Mammary epithelial cell (primary cell): ENCODE measurements at regions of chr12 and their contacts with region 1.

Region 1: GRCh38 chr12:26651566-26652188 is 181.3 kb downstream of the ITPR2 start:
- DNase-seq: peak; percentile 67
- H3K4me3 ChIP-seq: no peak overlapping the region
- H3K27ac ChIP-seq: no peak overlapping the region
- H3K4me1 ChIP-seq: peaks cover 14% of the 10 kb centered on the region
- H3K27me3 ChIP-seq: no peaks in the 10 kb centered on the region
- CTCF ChIP-seq: peak; percentile 72 to 84

Region 2: GRCh38 chr12:26119391-26119981 is 532.2 kb before region 1 on chr12:
- CTCF ChIA-PET with region 1: no interaction called
- dilution Hi-C with region 1: no loop called
- in situ Hi-C with region 1: loop called in 1 of 2 experiments (anchors 25 kb)
- intact Hi-C with region 1: loop called (anchors 1 kb)
- DNase-seq: peak; percentile 68
- H3K4me3 ChIP-seq: no peak overlapping the region
- H3K27ac ChIP-seq: peak overlapping the region; percentile 60
- H3K4me1 ChIP-seq: peaks cover 42% of the 10 kb centered on the region
- H3K27me3 ChIP-seq: no peaks in the 10 kb centered on the region
- CTCF ChIP-seq: peak; percentile 57 to 62

Region 3: DNA sequence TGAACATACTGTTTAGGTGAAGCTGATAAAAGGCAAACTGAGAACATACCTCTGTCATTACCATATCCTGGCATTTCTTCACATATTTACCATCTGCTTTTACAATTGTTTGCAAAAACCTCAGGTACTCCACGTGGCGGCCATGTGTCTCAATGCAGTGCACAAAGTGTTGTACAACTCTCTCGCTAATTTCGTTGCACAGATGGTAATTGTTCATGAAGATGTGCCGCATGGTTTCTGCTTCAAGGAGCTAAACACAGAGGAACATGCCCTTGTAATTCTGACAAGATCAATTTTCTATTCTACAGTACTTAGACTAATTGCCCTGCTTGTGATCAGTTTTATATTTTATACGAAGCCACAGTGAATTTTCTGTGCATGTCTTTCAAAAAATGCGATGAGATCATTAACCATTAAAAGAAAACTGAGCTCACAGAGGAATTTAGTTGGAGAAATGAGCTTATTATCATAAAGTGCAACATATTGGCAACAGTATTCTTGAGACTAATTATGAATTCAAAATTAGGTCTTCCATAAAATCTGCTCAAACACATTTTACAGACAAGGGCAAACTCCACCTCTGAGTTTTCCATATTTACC is 52.5 kb before region 1 on chr12:
- CTCF ChIA-PET with region 1: no interaction called
- dilution Hi-C with region 1: no loop called
- in situ Hi-C with region 1: no loop called
- intact Hi-C with region 1: no loop called
- DNase-seq: no peak
- H3K4me3 ChIP-seq: no peak overlapping the region
- H3K27ac ChIP-seq: no peak overlapping the region
- H3K4me1 ChIP-seq: no peaks in the 10 kb centered on the region
- H3K27me3 ChIP-seq: no peaks in the 10 kb centered on the region
- CTCF ChIP-seq: no peak

Region 4: GRCh38 chr12:26621932-26622476 is 29.7 kb before region 1 on chr12:
- CTCF ChIA-PET with region 1: no interaction called
- dilution Hi-C with region 1: no loop called
- in situ Hi-C with region 1: no loop called
- intact Hi-C with region 1: no loop called
- DNase-seq: no peak
- H3K4me3 ChIP-seq: no peak overlapping the region
- H3K27ac ChIP-seq: no peak overlapping the region
- H3K4me1 ChIP-seq: no peaks in the 10 kb centered on the region
- H3K27me3 ChIP-seq: no peaks in the 10 kb centered on the region
- CTCF ChIP-seq: no peak

Region 5: GRCh38 chr12:26701604-26702215 is 50.0 kb after region 1 on chr12:
- CTCF ChIA-PET with region 1: interaction called, 3 read pairs
- dilution Hi-C with region 1: no loop called
- in situ Hi-C with region 1: no loop called
- intact Hi-C with region 1: loop called (anchors 2 kb)
- DNase-seq: peak; percentile 31
- H3K4me3 ChIP-seq: no peak overlapping the region
- H3K27ac ChIP-seq: no peak overlapping the region
- H3K4me1 ChIP-seq: no peaks in the 10 kb centered on the region
- H3K27me3 ChIP-seq: no peaks in the 10 kb centered on the region
- CTCF ChIP-seq: peak; percentile 43 to 57

Region 6: DNA sequence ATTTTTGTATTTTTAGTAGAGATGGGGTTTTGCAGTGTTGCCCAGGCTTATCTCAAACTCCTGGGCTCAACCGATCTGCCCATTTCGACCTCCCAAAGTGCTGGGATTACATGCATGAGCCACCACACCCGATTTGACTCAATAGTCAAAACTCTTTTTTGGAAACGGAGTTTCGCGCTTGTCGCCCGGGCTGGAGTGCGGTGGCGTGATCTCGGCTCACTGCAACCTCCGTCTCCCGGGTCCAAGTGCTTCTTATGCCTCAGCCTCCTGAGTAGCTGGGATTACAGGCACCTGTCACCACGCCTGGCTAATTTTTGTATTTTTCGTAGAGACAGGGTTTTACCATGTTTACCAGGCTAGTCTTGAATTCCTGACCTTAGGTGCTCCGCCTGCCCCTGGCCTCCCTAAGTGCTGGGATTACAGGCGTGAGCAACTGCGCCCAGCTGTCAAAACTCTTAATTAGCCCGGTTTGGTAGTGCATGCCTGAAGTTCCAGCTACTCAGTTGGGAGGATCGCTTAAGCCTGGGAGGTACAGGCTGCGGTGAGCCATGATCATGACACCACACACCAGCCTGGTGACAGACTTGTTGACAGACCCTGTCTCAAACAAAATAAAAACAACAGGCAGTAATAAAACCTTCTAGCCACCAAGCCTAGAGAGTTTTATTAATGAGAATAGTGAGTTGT is 383.1 kb after region 1 on chr12:
- CTCF ChIA-PET with region 1: no interaction called
- dilution Hi-C with region 1: no loop called
- in situ Hi-C with region 1: no loop called
- intact Hi-C with region 1: no loop called
- DNase-seq: no peak
- H3K4me3 ChIP-seq: no peak overlapping the region
- H3K27ac ChIP-seq: no peak overlapping the region
- H3K4me1 ChIP-seq: no peaks in the 10 kb centered on the region
- H3K27me3 ChIP-seq: no peaks in the 10 kb centered on the region
- CTCF ChIP-seq: no peak